OCI-LY7 (cell line): ENCODE measurements at regions of chr7 and their contacts with region 1.

Region 1: GRCh38 chr7:132318352-132319318 is 257.6 kb downstream of the PLXNA4 start:
- DNase-seq: peak; percentile 74
- H3K4me3 ChIP-seq: no peak overlapping the region
- H3K27ac ChIP-seq: no peak overlapping the region
- H3K4me1 ChIP-seq: no peaks in the 10 kb centered on the region
- CTCF ChIP-seq: peak; percentile 87

Region 2: DNA sequence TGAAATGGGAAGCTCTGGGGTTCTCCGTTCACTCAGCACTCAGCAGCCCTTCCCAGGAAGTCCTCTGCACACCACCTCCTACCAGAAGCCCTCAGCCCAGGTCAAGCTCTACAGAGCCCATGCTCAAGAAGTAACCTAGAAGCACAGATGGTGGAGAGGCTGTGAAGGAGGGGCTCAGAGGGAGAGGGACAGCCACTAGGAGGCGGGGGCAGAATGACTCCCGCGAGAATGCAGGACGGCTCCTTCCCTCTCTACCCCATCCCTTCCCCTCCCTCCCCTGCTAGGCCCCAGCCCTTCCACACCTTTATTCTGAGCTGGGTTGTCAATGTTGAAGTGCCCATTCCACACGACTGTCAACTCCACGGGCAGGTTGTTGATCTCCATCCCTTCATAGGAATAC is 115.6 kb before region 1 on chr7:
- CTCF ChIA-PET with region 1: no interaction called
- POLR2A ChIA-PET with region 1: no interaction called
- intact Hi-C with region 1: no loop called
- DNase-seq: no peak
- H3K4me3 ChIP-seq: no peak overlapping the region
- H3K27ac ChIP-seq: no peak overlapping the region
- H3K4me1 ChIP-seq: no peaks in the 10 kb centered on the region
- CTCF ChIP-seq: no peak

Region 3: GRCh38 chr7:132298790-132299189 is 19.8 kb before region 1 on chr7:
- CTCF ChIA-PET with region 1: no interaction called
- POLR2A ChIA-PET with region 1: no interaction called
- intact Hi-C with region 1: no loop called
- DNase-seq: no peak
- H3K4me3 ChIP-seq: no peak overlapping the region
- H3K27ac ChIP-seq: no peak overlapping the region
- H3K4me1 ChIP-seq: no peaks in the 10 kb centered on the region
- CTCF ChIP-seq: no peak

Region 4: GRCh38 chr7:132472463-132473120 is 154.0 kb after region 1 on chr7:
- CTCF ChIA-PET with region 1: no interaction called
- POLR2A ChIA-PET with region 1: no interaction called
- intact Hi-C with region 1: loop called (anchors 10 kb)
- DNase-seq: no peak
- H3K4me3 ChIP-seq: no peak overlapping the region
- H3K27ac ChIP-seq: no peak overlapping the region
- H3K4me1 ChIP-seq: no peaks in the 10 kb centered on the region
- CTCF ChIP-seq: no peak

Region 5: GRCh38 chr7:132580717-132581285 is 262.2 kb after region 1 on chr7:
- CTCF ChIA-PET with region 1: no interaction called
- POLR2A ChIA-PET with region 1: no interaction called
- intact Hi-C with region 1: loop called (anchors 1 kb)
- DNase-seq: peak; percentile 69
- H3K4me3 ChIP-seq: no peak overlapping the region
- H3K27ac ChIP-seq: no peak overlapping the region
- H3K4me1 ChIP-seq: no peaks in the 10 kb centered on the region
- CTCF ChIP-seq: peak; percentile 87